ENCODE measurements at regions of chr21 and their contacts with region 1.

Region 1: GRCh38 chr21:28410256-28410655 is 582.4 kb downstream of the LTN1 start:
- DNase-seq: no peak
- H3K4me3 ChIP-seq: no peak overlapping the region
- H3K27ac ChIP-seq: no peak overlapping the region
- H3K4me1 ChIP-seq: no peaks in the 10 kb centered on the region
- H3K27me3 ChIP-seq: no peaks in the 10 kb centered on the region
- CTCF ChIP-seq: no peak

Region 2: GRCh38 chr21:27700974-27701614 is 709.2 kb before region 1 on chr21:
- CTCF ChIA-PET with region 1: no interaction called
- POLR2A ChIA-PET with region 1: no interaction called
- intact Hi-C with region 1: no loop called
- DNase-seq: peak; percentile 50 to 52
- H3K4me3 ChIP-seq: no peak overlapping the region
- H3K27ac ChIP-seq: no peak overlapping the region
- H3K4me1 ChIP-seq: no peaks in the 10 kb centered on the region
- H3K27me3 ChIP-seq: no peaks in the 10 kb centered on the region
- CTCF ChIP-seq: peak; percentile 80

Region 3: DNA sequence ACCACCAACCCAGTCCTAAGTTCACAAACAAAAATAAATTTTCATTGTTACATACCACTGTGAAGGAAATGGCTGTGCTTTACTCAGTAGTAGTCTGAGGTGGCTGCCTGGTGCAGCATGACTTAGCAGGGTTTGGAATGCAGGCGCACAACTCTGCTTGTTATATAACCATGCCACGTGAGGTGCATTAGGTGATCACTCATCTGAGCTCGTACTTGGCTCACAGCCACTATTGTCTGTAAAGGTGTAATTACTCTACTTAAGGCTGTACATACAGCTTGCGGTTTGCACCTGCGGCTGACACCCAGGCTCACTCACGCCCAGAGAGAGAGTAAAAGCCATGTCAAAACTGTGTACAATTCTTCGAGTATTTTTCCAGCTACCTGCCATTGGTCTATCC is 17.0 kb before region 1 on chr21:
- CTCF ChIA-PET with region 1: no interaction called
- POLR2A ChIA-PET with region 1: no interaction called
- intact Hi-C with region 1: no loop called
- DNase-seq: peak; percentile 75 to 84
- H3K4me3 ChIP-seq: no peak overlapping the region
- H3K27ac ChIP-seq: peak overlapping the region; percentile 75
- H3K4me1 ChIP-seq: peaks cover 15% of the 10 kb centered on the region
- H3K27me3 ChIP-seq: no peaks in the 10 kb centered on the region
- CTCF ChIP-seq: no peak

Region 4: GRCh38 chr21:28480470-28480869 is 70.2 kb after region 1 on chr21:
- CTCF ChIA-PET with region 1: no interaction called
- POLR2A ChIA-PET with region 1: no interaction called
- intact Hi-C with region 1: no loop called
- DNase-seq: no peak
- H3K4me3 ChIP-seq: no peak overlapping the region
- H3K27ac ChIP-seq: no peak overlapping the region
- H3K4me1 ChIP-seq: no peaks in the 10 kb centered on the region
- H3K27me3 ChIP-seq: no peaks in the 10 kb centered on the region
- CTCF ChIP-seq: no peak

Region 5: GRCh38 chr21:28492127-28492526 is 81.9 kb after region 1 on chr21:
- CTCF ChIA-PET with region 1: interaction called, 14 read pairs
- POLR2A ChIA-PET with region 1: no interaction called
- intact Hi-C with region 1: no loop called
- DNase-seq: no peak
- H3K4me3 ChIP-seq: no peak overlapping the region
- H3K27ac ChIP-seq: no peak overlapping the region
- H3K4me1 ChIP-seq: no peaks in the 10 kb centered on the region
- H3K27me3 ChIP-seq: no peaks in the 10 kb centered on the region
- CTCF ChIP-seq: no peak

Region 6: DNA sequence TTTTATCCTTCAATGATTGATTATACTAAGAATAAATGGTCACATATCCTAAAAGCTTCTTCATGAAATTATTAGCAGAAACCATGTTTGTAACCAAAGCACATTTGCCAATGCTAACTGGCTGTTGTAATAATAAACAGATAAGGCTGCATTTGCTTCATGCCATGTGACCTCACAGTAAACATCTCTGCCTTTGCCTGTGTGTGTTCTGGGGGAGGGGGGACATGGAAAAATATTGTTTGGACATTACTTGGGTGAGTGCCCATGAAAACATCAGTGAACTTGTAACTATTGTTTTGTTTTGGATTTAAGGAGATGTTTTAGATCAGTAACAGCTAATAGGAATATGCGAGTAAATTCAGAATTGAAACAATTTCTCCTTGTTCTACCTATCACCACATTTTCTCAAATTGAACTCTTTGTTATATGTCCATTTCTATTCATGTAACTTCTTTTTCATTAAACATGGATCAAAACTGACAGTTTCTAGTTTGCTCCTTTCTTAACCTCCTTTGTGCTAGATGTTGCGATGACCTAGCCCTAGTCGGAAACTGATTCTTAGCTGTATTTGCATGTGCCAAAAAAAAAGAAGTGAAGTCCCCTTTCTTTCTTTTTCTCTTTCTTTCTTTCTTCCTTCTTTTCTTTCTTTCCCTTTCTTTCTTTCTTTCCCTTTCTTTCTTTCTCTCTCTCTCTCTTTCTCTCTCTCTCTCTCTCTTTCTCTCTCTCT is 765.3 kb after region 1 on chr21:
- CTCF ChIA-PET with region 1: no interaction called
- POLR2A ChIA-PET with region 1: no interaction called
- intact Hi-C with region 1: no loop called
- DNase-seq: peak in 1 of 2 experiments; percentile 45
- H3K4me3 ChIP-seq: no peak overlapping the region
- H3K27ac ChIP-seq: 0 out of 2 replicates have a peak overlapping the region, but pooled peaks have one; percentile 45
- H3K4me1 ChIP-seq: peaks cover 44% of the 10 kb centered on the region
- H3K27me3 ChIP-seq: no peaks in the 10 kb centered on the region
- CTCF ChIP-seq: no peak

Measured in PC-9 (cell line).